Mucosa of descending colon (tissue), 3 donors: ENCODE measurements at regions of chrX and their contacts with region 1.

Region 1: DNA sequence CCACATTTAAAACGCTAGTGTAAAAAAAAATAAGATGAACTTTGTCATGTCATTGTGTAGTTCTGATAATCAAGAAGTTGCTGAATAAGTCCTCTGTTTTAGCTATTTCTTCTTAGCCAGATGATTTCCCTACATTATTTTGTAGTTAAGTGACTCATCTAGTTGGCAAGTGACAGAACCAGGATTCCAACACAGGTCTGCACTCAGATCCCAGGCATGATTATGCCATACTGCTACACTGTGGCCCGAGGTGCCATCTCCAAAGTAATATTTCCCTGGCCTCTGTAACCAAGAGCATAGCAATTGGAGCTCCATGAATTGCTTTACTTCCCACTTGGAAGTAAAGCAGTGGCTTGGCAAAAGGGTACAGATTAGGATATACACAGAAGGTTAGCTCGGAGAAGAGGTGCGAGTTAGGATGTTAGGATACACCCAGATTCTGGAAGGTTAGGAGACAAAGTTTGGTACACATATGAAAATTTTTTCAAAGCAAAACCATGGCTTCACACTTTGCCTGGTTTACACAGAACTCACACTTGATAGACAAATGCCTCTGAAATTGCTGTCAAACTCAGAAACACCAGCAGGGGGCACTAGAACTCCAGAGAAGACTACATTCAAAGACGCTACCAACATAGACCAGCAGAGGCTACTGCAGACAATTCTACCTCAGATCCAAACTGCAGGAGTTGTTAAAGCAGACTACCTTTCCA is 41.4 kb downstream of the SRPX2 start:
- DNase-seq: peak in 1 of 3 donors; percentile 85
- ATAC-seq: peak; percentile 97
- H3K4me3 ChIP-seq: no peak overlapping the region
- H3K4me1 ChIP-seq: no peaks in the 10 kb centered on the region
- CTCF ChIP-seq: peak; percentile 57

Region 2: GRCh38 chrX:100768679-100769338 is 83.4 kb after region 1 on chrX:
- intact Hi-C with region 1: loop called (anchors 2 to 5 kb)
- DNase-seq: peak; percentile 60 to 96 (median 82)
- ATAC-seq: peak; percentile 100
- H3K4me3 ChIP-seq: no peak overlapping the region
- H3K4me1 ChIP-seq: no peaks in the 10 kb centered on the region
- CTCF ChIP-seq: peak; percentile 89